ENCODE measurements at regions of chr19 and their contacts with region 1.

Region 1: DNA sequence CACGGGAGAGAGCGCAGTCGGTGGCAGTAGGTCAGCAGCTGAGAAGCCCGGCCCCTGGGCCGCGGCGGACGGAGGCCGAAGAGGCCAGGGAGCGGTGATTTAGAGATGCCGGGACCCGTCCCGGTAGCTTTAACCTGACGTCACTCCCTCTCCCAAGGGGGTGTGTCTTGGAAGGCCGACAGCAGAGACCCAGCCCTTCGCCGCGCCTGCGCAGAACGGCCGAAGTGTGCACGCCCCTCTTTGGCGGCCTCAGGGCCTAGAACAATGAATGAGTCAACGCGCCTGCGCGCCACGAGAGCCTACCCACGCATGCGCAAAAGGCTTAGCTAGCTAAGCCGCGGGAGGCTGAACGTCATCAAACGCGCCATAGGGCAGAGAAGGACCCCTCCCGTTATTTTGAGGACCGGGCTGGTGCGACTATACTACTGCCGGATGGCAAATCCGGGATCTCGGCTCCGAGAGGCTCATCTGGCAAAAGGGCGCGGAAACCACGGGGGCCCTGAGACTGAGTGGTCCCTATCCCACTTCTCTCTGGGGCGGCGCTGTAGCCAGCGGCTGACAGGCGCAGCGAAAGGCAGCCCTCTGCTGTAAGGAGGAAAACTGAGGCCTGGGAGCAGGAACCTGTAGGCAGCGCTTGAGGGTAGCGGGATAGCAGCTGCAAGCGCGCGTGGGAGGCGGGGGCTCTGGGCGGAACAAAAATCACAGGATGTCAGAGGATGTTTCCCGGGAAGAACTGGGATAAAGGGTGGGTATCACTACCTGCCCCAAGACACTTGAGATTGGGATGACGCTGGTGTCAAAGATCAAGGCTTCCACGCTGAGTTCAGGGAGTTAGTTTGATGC is at the starts of genes IRGQ and ZNF576:
- DNase-seq: peak; percentile 95 to 100 (median 99)

Region 2: DNA sequence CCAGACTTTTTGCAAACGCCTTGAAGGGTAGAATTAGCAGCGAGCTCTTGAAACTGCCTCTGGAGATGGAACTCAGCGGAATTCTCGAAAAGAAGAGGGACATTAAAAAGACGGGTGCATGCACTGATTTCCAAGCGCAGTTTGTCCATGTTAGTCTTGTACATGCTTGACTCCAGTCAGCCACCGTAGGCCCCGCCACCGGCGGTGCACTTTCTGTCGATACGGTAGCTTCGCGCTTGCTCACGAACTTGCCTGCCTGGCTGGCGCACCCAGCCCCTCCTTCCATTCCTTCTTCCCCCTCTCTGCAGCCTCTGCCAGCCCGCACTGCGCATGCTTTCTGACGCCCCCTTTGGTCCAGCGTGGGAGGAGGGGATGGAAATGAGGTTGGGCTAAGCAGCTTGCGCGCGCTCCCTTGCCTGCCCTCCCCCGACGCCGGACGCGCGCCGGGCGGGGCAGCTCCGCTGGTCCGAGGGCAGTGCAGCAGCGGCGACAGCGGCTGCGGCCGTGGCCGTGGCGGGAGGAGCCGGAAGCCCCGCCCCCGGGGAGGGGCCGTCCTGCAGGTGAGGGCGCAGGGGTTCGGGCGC is 63.2 kb before region 1 on chr19 and contains the start of gene ZNF575:
- intact Hi-C with region 1: loop called (anchors 10 kb)
- DNase-seq: peak; percentile 86 to 97 (median 94)

Region 3: DNA sequence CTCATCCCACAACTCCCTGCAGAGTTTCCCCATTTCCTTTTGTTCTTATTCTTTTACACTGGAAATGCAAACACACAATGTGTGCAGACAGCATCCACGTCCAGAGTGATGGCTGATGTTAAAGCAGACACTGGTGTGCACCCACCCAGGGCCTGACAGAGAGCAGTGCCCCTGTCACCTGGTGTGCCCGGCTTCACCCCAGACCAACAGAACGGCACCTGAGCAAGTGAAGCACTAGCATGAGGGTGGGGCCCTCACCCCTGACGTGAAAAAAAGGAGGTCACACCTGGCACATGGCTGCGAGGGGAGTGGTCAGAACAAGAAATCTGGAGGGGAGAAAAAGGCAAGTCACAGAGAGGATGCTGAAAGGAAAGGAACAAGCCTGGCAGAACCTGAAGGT is 50.9 kb before region 1 on chr19:
- intact Hi-C with region 1: no loop called
- DNase-seq: no peak

Region 4: DNA sequence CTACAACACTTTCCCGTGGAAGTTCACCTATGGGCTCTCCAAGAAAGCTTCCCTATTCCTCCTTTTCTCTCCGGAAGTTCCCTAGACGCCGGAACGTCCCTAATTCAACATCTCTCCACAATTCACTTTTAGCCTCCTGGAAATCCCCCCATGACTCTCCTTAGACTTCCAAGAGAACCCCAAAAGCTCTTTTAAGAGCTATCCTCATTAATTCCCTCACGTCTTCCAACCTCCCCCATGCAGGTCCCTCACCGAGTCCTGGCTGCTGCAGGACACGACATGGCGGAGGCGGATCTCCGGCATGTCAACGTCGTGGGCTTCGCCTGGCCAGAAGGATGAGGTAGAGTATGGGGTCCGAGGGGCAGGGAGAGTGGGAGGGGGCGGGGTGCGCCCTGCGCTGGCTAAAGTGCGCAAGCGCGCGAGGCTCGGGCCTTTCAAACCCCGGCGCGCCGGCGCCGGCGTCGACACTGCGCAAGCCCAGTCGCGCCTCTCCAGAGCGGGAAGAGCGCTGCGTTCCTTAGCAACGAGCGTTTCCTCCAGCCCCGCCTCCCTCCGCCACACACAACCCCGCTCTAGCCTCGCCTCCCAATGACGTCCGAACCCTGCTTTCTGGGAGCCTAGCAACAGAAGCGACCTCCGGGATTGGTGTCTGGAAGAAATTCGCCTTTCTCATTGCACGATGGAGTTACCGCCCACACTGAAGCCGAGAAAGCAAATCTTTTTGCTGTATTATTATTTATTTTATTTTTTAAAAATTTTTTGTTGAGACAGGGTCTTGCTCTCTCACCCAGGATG is 20.9 kb before region 1 on chr19 and contains the starts of genes PINLYP and XRCC1:
- intact Hi-C with region 1: loop called (anchors 1 kb)
- DNase-seq: peak; percentile 93 to 99 (median 98)

Region 5: DNA sequence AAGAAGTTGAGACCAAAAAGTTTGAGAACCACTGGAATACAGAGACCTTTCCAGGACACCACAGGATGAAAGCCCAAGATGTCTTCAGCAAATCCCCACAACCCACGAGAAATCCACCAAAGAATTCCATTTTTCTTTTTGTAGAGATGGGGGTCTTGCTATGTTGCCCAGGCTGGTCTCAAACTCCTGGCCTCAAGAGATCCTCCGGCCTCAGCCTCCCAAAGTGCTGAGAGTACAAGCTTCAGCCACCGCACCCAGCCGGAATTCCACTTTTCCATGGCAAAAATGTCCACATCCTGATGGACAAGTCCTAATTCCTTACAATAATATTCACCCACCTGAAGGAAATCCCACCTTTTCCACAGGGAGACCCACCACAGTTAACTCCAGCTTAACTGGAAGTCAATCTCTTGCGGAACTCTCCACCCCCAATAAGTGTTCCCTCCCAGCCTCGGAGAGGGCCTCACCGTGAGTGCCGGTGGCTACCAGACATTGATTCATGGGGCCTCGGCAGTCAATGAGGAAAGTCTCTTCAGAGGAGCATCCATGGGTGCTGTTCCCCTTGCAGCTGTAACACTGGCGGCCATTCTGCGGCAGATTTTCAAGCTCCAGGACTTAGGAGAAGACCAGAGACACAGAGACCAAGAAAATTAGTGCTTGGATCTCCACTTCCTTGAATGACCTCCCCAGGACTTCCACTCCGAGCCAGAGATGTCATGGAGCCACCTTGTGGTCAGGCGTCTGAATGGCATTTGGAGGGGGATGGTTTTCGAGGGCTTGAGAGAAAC is 55.7 kb after region 1 on chr19:
- intact Hi-C with region 1: loop called (anchors 5 kb)
- DNase-seq: peak in 41 of 42 donors; percentile 51 to 90 (median 77)